ENCODE measurements at regions of chr13 and their contacts with region 1.

Region 1: GRCh38 chr13:28531077-28531844 is 36.3 kb upstream of the FLT1 start:
- DNase-seq: peak; percentile 81

Region 2: DNA sequence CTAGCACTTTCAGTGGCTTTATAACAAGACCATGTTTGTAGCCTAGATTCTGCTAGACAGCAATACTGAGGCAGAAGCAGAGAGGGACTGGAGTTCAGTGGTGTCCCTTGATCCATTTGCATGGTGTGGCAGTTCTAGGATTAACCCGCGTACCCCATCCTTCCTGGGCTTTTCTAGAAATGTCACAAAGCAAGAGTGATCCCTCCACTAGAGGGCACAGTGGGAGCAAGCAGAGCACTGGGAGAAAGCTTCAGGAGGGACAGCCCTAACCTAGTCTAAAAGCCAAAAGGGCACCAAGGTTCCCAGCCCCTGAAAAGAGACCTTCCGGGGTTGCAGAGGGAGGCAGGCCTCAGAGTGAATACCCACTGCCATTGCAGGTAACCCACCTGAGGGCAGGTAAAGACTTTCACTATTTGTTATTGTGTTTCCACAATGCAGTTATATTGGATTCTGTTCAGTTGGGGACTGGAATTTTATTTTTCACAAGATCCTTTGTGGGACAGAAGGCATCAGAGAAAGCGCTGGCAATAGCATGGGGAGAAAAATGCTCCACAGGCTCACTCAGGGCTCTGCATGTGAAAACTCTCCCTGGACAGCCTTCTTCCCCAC is 207.0 kb before region 1 on chr13:
- intact Hi-C with region 1: loop called (anchors 5 kb)
- DNase-seq: peak; percentile 78

Region 3: DNA sequence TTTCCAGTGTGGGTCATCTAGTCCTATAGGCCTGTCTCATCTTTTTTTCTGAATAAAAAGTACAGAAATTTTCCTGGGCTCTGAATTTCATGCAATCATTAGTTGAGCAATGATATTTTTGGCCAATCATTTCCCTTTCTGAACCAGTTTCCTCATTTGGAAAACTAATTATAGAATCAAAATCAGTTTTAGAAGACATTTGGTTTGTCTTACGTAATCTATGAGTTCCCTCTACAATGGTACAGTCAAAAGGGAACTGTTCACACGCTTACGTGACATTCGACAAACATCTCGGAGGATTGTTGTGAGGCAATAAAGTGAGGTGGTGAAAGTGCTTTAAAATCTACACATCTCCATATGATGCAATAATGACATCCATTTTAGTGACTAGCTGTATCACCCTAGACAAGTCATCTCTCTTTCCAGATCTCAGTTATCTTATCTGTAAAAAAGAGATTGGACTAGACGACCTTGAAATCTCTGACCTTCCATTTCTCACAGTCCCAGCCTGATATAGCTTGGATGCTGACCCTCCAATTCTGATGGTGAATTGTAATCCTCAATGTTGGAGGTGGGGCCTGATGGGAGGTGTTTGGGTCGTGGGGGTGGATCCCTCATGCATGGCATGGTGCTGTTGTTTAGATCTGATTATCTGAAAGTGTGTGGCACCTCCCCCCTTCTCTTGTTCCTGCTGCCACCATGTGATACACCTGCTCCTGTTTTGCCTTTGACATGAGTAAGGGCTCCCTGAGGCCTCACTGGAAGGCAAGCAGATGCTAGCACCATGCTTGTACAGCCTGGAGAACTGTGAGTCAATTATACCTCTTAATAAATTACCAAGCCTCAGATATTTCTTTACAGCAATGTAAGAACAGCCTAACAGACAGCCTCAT is 63.0 kb before region 1 on chr13:
- intact Hi-C with region 1: loop called (anchors 10 kb)
- DNase-seq: no peak

Region 4: DNA sequence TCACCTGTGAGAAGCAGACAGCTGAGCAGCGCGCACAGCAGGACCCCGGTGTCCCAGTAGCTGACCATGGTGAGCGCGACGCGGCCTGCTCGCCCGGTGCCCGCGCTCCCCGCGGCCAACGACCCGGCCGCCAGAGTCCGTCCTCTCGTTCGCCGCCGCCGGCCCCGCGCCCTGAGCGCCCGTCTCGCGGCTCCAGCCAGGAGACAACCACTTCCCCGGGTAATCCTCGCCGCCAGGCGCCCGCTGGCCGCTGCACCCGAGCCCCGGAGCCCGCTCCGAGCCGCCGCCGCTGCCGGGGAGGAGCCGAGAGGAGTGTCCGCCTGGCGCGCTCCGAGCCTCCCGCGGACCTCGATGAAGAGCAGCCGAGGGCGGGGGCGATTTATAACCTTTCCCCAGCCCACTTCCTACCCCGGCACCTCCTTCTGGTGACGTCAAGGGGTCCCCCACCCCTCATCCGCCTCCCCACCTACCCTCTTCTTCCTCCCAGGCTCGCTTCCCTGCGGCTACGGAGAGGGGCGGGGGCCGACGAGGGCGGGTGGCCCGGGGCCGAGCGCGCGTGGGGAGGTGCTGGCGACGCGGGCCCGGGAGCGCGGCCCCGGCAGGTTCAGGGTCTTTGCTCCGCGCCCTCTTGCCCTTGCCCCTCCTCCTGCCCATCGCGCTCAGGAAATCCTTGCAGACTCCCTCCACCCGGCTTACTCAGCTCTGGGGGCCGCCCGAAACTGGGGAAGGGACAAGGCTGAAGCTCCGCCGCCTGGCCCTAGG is 36.3 kb before region 1 on chr13 and contains the start of gene FLT1:
- intact Hi-C with region 1: loop called (anchors 1 kb)
- DNase-seq: peak; percentile 87
- total RNA-seq, gene FLT1: 53.4 TPM

Region 5: DNA sequence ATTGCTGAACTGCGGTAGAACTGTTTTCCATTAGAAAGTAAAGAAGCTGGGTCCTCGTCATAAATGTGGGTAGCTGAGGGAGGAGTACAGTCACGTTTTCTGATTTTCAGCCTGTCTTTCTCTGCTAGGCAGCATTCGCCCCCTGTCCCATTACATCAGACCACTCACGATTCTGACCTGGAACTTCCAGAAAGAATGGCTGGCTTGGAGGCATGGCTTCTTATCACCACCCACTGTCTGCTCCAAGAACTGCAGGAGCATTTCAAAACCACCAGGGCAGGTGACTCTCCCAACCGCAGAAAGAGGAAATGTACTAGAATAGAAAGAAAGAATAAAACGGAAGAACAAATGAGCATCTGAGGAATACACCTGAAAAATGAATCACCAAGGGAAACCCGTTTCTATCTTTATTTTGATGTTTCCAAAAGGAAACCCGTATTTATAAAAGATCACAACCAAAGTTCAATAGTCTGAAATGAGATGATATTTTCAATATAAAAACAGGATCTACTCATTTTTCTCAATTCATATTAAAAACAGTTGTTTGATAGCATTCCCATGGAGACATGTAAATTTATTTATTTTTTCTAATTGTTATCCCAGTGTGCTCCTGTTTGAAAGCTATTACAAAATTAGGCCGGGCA is 105.5 kb after region 1 on chr13:
- intact Hi-C with region 1: loop called (anchors 5 kb)
- DNase-seq: no peak

Region 6: GRCh38 chr13:29465741-29466293 is 934.6 kb after region 1 on chr13:
- intact Hi-C with region 1: no loop called
- DNase-seq: no peak

Measured in cardiac septum (tissue), 1 donor.